Activated CD4-positive, alpha-beta T cell treated with anti-CD3 and anti-CD28 coated beads, Interleukin-2, amount 10 ng/mL, durations not matched to agents 7 days and 5 days (primary cell): ENCODE measurements at regions of chr3 and their contacts with region 1.

Region 1: GRCh38 chr3:46191730-46192129 is 16.4 kb downstream of the CCR1 start:
- DNase-seq: no peak
- H3K4me3 Mint-ChIP-seq: no peak overlapping the region
- H3K27ac Mint-ChIP-seq: no peak overlapping the region
- H3K4me1 Mint-ChIP-seq: peaks cover 14% of the 10 kb centered on the region
- H3K27me3 Mint-ChIP-seq: peaks cover 30% of the 10 kb centered on the region

Region 2: GRCh38 chr3:46208167-46208704 is 16.5 kb after region 1 on chr3 and contains the start of gene CCR1:
- CTCF ChIA-PET with region 1: interaction called, 24 read pairs
- POLR2A ChIA-PET with region 1: no interaction called
- DNase-seq: peak; percentile 54
- H3K4me3 Mint-ChIP-seq: peak within 1 kb of the TSS; percentile 63
- H3K27ac Mint-ChIP-seq: peak within 1 kb of the TSS; percentile 81
- H3K4me1 Mint-ChIP-seq: peaks cover 53% of the 10 kb centered on the region
- H3K27me3 Mint-ChIP-seq: no peaks in the 10 kb centered on the region
- total RNA-seq, gene CCR1: 6.4 to 6.6 TPM